CD14-positive monocyte (primary cell): ENCODE measurements at regions of chr15 and their contacts with region 1.

Region 1: GRCh38 chr15:38002883-38003477 is 68.5 kb downstream of the TMCO5A start:
- DNase-seq: peak; percentile 49 to 78 (median 65)
- H3K4me3 ChIP-seq: no peak overlapping the region
- H3K4me3 Mint-ChIP-seq: no peak overlapping the region
- H3K27ac ChIP-seq: no peak overlapping the region
- H3K27ac Mint-ChIP-seq: peak overlapping the region in 1 of 7 donors; percentile 81
- H3K4me1 ChIP-seq: peaks cover 11 to 21% of the 10 kb centered on the region in 2 donors
- H3K4me1 Mint-ChIP-seq: peaks cover 15% of the 10 kb centered on the region
- H3K27me3 ChIP-seq: no peaks in the 10 kb centered on the region
- H3K27me3 Mint-ChIP-seq: peaks cover 1 to 4% (median 2%) of the 10 kb centered on the region in 3 donors
- CTCF ChIP-seq: peak; percentile 83

Region 2: GRCh38 chr15:38252481-38253412 is 249.8 kb after region 1 on chr15 and contains the start of gene SPRED1:
- intact Hi-C with region 1: loop called (anchors 5 to 10 kb)
- DNase-seq: peak in 2 of 3 donors; percentile 12 to 29
- H3K4me3 ChIP-seq: peak within 1 kb of the TSS; percentile 71 to 85 (median 85)
- H3K4me3 Mint-ChIP-seq: peak within 1 kb of the TSS; percentile 92 to 98
- H3K27ac ChIP-seq: peak within 1 kb of the TSS; percentile 51 to 80
- H3K27ac Mint-ChIP-seq: peak within 1 kb of the TSS; percentile 71 to 91 (median 83)
- H3K4me1 ChIP-seq: peaks cover 31 to 39% of the 10 kb centered on the region in 2 donors
- H3K4me1 Mint-ChIP-seq: peaks cover 31% of the 10 kb centered on the region
- H3K27me3 ChIP-seq: peaks cover 20 to 23% of the 10 kb centered on the region in 2 donors
- H3K27me3 Mint-ChIP-seq: peaks cover 14 to 34% (median 18%) of the 10 kb centered on the region in 3 donors
- CTCF ChIP-seq: no peak
- polyA plus RNA-seq, gene SPRED1: 2.5 to 3.3 (median 3.2) TPM

Region 3: GRCh38 chr15:38354315-38354929 is 351.4 kb after region 1 on chr15:
- intact Hi-C with region 1: loop called in 1 of 2 experiments (anchors 2 kb)
- DNase-seq: peak; percentile 33 to 57 (median 44)
- H3K4me3 ChIP-seq: no peak overlapping the region
- H3K4me3 Mint-ChIP-seq: no peak overlapping the region
- H3K27ac ChIP-seq: no peak overlapping the region
- H3K27ac Mint-ChIP-seq: no peak overlapping the region
- H3K4me1 ChIP-seq: no peaks in the 10 kb centered on the region
- H3K4me1 Mint-ChIP-seq: no peaks in the 10 kb centered on the region
- H3K27me3 ChIP-seq: no peaks in the 10 kb centered on the region
- H3K27me3 Mint-ChIP-seq: no peaks in the 10 kb centered on the region
- CTCF ChIP-seq: peak; percentile 76